ENCODE measurements at regions of chr15 and their contacts with region 1.

Region 1: DNA sequence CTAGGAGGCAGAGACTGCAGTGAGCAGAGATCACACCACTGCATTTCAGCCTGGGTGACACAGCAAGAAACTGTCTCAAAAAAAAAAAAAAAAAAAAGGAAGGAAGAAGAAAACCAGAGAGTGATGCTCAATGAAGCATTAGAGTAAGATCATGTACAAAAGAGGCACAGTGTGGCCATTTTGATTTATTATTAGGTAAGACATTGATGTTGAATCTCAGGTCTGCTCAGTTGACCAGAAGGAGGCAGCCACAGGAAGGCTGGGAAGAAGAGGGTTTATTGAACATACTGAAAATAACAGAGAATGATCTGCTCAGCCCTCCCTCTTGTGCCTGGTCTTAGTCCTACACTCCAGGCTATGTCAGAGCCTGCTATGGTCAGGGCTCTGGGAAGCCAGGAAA is 15.6 kb downstream of the LRRK1 start:
- DNase-seq: no peak
- ATAC-seq: no peak
- H3K4me3 ChIP-seq: no peak overlapping the region
- H3K27ac ChIP-seq: no peak overlapping the region
- H3K4me1 ChIP-seq: peaks cover 0 to 11% (median 0%) of the 10 kb centered on the region in 12 donors
- H3K27me3 ChIP-seq: no peaks in the 10 kb centered on the region
- CTCF ChIP-seq: no peak
- POLR2A ChIP-seq: no peak

Region 2: GRCh38 chr15:100981086-100981485 is 46.4 kb after region 1 on chr15:
- intact Hi-C with region 1: loop called in 1 of 10 experiments (anchors 5 kb)
- DNase-seq: no peak
- ATAC-seq: no peak
- H3K4me3 ChIP-seq: no peak overlapping the region
- H3K27ac ChIP-seq: no peak overlapping the region
- H3K4me1 ChIP-seq: no peaks in the 10 kb centered on the region
- H3K27me3 ChIP-seq: peaks cover 0 to 7% (median 0%) of the 10 kb centered on the region in 9 donors
- CTCF ChIP-seq: no peak
- POLR2A ChIP-seq: no peak

Region 3: GRCh38 chr15:101358895-101359294 is 424.2 kb after region 1 on chr15:
- intact Hi-C with region 1: no loop called
- DNase-seq: peak in 3 of 5 donors; percentile 58 to 77 (median 71)
- ATAC-seq: peak; percentile 79 to 86 (median 82)
- H3K4me3 ChIP-seq: no peak overlapping the region
- H3K27ac ChIP-seq: peak overlapping the region in 7 of 12 donors; percentile 16 to 76 (median 60)
- H3K4me1 ChIP-seq: peaks cover 0 to 27% (median 7%) of the 10 kb centered on the region in 12 donors
- H3K27me3 ChIP-seq: no peaks in the 10 kb centered on the region
- CTCF ChIP-seq: no peak
- POLR2A ChIP-seq: no peak